Ascending aorta (tissue), 2 donors: ENCODE measurements at regions of chr4 and their contacts with region 1.

Region 1: DNA sequence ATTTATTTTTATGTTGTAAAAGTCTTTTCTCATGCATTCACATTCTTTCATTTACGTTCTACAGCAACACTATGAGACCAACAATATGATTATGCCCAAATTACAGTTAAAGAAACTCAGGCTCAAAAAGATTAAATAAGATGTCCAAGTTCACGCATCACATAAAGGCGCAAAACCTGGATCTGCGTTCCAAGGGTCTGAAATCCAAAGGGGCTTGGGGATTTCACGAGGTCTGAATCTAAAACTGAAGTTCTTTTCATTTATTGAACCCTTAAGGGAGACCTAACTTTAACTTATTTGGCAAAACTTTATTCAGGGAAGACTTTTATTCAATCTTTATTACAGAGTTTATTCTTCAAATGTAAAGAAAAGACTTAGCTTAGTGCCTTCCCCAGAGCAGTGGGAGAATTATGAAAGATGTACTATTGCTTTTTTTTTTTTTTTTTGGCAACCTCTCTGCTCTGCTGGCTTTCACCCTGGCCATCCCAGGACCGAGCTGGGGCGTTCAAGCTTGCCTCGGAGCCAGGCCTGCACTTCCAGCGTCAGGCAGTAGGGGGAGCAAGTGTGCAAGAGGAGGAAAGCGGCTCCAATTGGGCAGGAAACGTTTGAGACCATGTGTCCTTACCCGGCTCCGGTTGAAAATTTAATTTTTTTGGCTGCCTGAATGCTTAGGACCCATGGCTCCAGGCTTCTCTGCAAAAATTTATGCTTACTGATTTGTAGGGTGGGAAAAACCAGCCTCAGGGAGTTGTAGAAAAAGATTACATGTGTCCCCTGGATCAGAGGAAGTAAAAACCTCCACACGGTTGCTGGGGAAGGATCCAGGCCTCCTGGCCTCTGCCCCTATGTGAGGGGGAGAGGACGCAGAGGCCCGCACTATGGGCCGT is 344.3 kb upstream of the KLF3 start:
- DNase-seq: peak; percentile 75 to 97
- H3K4me3 ChIP-seq: peak overlapping the region; percentile 46 to 52
- H3K27ac ChIP-seq: peak overlapping the region; percentile 83 to 87
- H3K4me1 ChIP-seq: peaks cover 9 to 15% of the 10 kb centered on the region in 2 donors
- H3K27me3 ChIP-seq: no peaks in the 10 kb centered on the region
- CTCF ChIP-seq: peak; percentile 96 to 100 (median 99)

Region 2: GRCh38 chr4:37885496-37885895 is 434.2 kb before region 1 on chr4:
- intact Hi-C with region 1: no loop called
- DNase-seq: peak in 1 of 2 donors; percentile 75
- H3K4me3 ChIP-seq: peak overlapping the region in 1 of 2 donors; percentile 26
- H3K27ac ChIP-seq: peak overlapping the region; percentile 64 to 83
- H3K4me1 ChIP-seq: peaks cover 0 to 20% of the 10 kb centered on the region in 2 donors
- H3K27me3 ChIP-seq: no peaks in the 10 kb centered on the region
- CTCF ChIP-seq: no peak

Region 3: DNA sequence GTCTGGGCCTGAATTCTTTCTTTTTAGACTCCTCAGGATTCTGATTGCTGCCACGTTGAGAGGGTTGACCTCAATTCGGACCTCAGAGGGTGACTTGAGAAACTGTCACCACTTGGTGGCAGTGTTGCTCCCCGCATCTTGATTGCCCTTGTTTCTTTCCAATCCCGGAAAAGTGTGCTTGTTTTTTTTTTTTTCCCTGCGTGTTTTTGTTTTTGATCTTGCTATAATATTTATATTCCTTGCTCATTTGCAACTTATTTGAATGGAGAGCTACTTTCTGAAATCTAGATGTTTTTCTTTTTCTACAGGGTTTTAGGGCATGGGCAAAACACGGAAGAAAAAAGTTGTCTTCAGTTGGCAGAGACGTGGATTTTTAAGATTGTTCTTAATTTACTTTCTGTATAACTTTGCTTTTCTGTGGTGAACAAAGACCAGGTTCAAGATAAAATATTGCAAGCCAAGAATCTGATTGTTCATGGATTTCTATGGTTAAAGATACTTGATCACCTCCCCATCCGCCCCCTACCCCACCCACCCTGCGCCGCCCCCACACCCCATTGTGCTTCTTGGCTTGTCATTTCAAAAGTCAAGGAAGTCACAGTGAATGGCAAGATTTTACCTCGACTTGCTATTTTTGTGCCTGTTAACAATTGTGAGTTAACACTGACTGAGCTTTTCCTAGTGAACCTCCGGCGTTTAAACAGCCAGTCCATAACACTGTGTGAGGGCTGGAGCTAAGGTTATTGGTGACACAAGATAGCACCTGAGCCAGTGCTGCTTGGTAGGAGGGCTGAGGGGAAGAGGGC is 257.4 kb before region 1 on chr4:
- intact Hi-C with region 1: loop called (anchors 5 kb)
- DNase-seq: peak in 1 of 2 donors; percentile 86
- H3K4me3 ChIP-seq: peak overlapping the region; percentile 49
- H3K27ac ChIP-seq: peak overlapping the region; percentile 55 to 63
- H3K4me1 ChIP-seq: no peaks in the 10 kb centered on the region
- H3K27me3 ChIP-seq: no peaks in the 10 kb centered on the region
- CTCF ChIP-seq: peak; percentile 40 to 83 (median 78)

Region 4: GRCh38 chr4:38190717-38191178 is 129.0 kb before region 1 on chr4:
- intact Hi-C with region 1: loop called (anchors 2 kb)
- DNase-seq: peak in 1 of 2 donors; percentile 90
- H3K4me3 ChIP-seq: no peak overlapping the region
- H3K27ac ChIP-seq: peak overlapping the region; percentile 81 to 83
- H3K4me1 ChIP-seq: peaks cover 14 to 35% of the 10 kb centered on the region in 2 donors
- H3K27me3 ChIP-seq: no peaks in the 10 kb centered on the region
- CTCF ChIP-seq: no peak

Region 5: DNA sequence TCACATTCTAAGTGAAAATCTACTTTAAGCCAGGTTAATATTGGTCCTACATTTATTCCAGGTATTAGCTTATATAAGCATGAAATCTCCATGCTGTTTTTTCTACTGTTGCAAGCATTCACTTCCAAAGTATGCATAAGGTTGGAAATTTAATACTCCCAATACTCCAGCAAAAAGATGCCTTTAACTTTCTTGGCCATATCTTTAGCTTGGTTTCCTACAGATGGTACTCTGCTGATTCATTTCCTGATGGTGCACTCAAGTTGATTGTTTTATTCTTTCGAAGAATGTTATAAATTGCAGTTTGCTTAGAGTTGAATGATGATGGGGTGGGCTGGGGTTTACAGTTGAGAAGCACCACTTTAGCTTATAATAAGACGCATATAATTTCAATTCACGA is 29.3 kb before region 1 on chr4:
- intact Hi-C with region 1: no loop called
- DNase-seq: no peak
- H3K4me3 ChIP-seq: no peak overlapping the region
- H3K27ac ChIP-seq: no peak overlapping the region
- H3K4me1 ChIP-seq: no peaks in the 10 kb centered on the region
- H3K27me3 ChIP-seq: no peaks in the 10 kb centered on the region
- CTCF ChIP-seq: no peak

Region 6: GRCh38 chr4:38366456-38366855 is 46.8 kb after region 1 on chr4:
- intact Hi-C with region 1: loop called (anchors 2 kb)
- DNase-seq: peak in 1 of 2 donors; percentile 82
- H3K4me3 ChIP-seq: no peak overlapping the region
- H3K27ac ChIP-seq: peak overlapping the region; percentile 68 to 74
- H3K4me1 ChIP-seq: peaks cover 0 to 29% of the 10 kb centered on the region in 2 donors
- H3K27me3 ChIP-seq: no peaks in the 10 kb centered on the region
- CTCF ChIP-seq: no peak

Region 7: GRCh38 chr4:38730830-38731646 is 411.3 kb after region 1 on chr4:
- intact Hi-C with region 1: loop called (anchors 1 kb)
- DNase-seq: peak in 1 of 2 donors; percentile 83
- H3K4me3 ChIP-seq: no peak overlapping the region
- H3K27ac ChIP-seq: no peak overlapping the region
- H3K4me1 ChIP-seq: no peaks in the 10 kb centered on the region
- H3K27me3 ChIP-seq: no peaks in the 10 kb centered on the region
- CTCF ChIP-seq: peak; percentile 82 to 92 (median 89)